Right ventricle myocardium inferior (tissue), 1 donor: ENCODE measurements at regions of chr22 and their contacts with region 1.

Region 1: GRCh38 chr22:45413368-45414211 is at the starts of genes RIBC2 and SMC1B:
- DNase-seq: peak; percentile 84
- ATAC-seq: peak; percentile 92
- total RNA-seq, gene RIBC2: 0.51 TPM
- total RNA-seq, gene SMC1B: not detected

Region 2: GRCh38 chr22:45671768-45672563 is 258.4 kb after region 1 on chr22 and contains the start of gene ATXN10:
- intact Hi-C with region 1: loop called (anchors 10 kb)
- DNase-seq: peak; percentile 89
- ATAC-seq: peak; percentile 88
- total RNA-seq, gene ATXN10: 138 TPM